CD14-positive monocyte (primary cell): ENCODE measurements at regions of chr2 and their contacts with region 1.

Region 1: GRCh38 chr2:135741395-135742324 is at the start of gene UBXN4:
- DNase-seq: peak; percentile 98 to 99 (median 98)
- H3K4me3 ChIP-seq: peak within 1 kb of the TSS; percentile 88 to 99 (median 90)
- H3K4me3 Mint-ChIP-seq: peak within 1 kb of the TSS; percentile 94 to 96
- H3K27ac ChIP-seq: peak within 1 kb of the TSS; percentile 98 to 100
- H3K27ac Mint-ChIP-seq: peak within 1 kb of the TSS; percentile 96 to 99 (median 99)
- H3K4me1 ChIP-seq: peaks cover 10 to 18% of the 10 kb centered on the region in 2 donors
- H3K4me1 Mint-ChIP-seq: peaks cover 23% of the 10 kb centered on the region
- H3K27me3 ChIP-seq: no peaks in the 10 kb centered on the region
- H3K27me3 Mint-ChIP-seq: peaks cover 0 to 1% (median 0%) of the 10 kb centered on the region in 3 donors
- CTCF ChIP-seq: peak; percentile 32
- polyA plus RNA-seq, gene UBXN4: 53.8 to 107 (median 74.2) TPM

Region 2: DNA sequence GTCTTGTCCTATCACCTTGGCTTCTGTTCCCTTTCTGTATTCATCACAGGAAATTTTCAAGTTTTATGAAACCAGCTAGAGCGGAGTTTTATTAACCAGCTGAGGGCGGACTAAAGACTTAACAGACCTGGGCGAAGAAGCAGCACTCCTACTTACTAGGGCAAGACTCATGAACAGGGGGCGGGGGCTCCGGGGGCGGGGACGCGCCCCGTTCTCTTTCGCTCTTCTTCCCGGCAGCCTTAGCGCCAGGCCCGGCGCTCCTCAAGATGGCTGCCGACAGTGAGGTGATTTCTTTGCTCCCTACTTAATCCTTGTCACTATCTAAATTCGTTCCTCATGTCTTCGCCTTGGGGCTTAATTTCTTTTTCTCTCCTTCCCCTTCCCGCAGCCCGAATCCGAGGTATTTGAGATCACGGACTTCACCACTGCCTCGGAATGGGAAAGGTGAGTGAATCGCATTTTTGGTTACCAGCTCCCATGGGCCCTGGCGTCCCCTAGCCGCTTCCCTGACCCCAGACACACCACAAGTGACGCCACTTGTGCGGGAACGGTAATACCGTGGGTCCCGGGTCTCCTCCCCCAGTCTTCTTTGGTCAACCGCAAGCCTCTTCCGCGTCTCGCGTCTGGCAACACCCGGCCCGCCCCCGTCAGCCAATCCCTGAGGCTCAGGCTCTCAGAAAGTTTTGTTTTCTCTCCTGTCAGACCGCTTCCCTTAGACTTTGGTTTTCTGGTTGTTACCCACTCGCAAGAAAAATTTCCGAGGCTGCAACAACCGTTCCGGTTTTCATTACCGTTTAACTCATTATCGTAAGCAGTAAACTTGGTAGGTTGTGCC is 689.4 kb before region 1 on chr2 and contains the start of gene RAB3GAP1:
- intact Hi-C with region 1: loop called in 1 of 2 experiments (anchors 10 kb)
- DNase-seq: peak; percentile 76 to 81 (median 77)
- H3K4me3 ChIP-seq: peak within 1 kb of the TSS; percentile 89 to 97 (median 94)
- H3K4me3 Mint-ChIP-seq: peak within 1 kb of the TSS; percentile 99
- H3K27ac ChIP-seq: peak within 1 kb of the TSS; percentile 99 to 100
- H3K27ac Mint-ChIP-seq: peak within 1 kb of the TSS; percentile 100
- H3K4me1 ChIP-seq: peaks cover 17 to 23% of the 10 kb centered on the region in 2 donors
- H3K4me1 Mint-ChIP-seq: peaks cover 27% of the 10 kb centered on the region
- H3K27me3 ChIP-seq: no peaks in the 10 kb centered on the region
- H3K27me3 Mint-ChIP-seq: peaks cover 0 to 1% (median 0%) of the 10 kb centered on the region in 3 donors
- CTCF ChIP-seq: no peak
- polyA plus RNA-seq, gene RAB3GAP1: 8.0 to 17.4 (median 11.3) TPM

Region 3: DNA sequence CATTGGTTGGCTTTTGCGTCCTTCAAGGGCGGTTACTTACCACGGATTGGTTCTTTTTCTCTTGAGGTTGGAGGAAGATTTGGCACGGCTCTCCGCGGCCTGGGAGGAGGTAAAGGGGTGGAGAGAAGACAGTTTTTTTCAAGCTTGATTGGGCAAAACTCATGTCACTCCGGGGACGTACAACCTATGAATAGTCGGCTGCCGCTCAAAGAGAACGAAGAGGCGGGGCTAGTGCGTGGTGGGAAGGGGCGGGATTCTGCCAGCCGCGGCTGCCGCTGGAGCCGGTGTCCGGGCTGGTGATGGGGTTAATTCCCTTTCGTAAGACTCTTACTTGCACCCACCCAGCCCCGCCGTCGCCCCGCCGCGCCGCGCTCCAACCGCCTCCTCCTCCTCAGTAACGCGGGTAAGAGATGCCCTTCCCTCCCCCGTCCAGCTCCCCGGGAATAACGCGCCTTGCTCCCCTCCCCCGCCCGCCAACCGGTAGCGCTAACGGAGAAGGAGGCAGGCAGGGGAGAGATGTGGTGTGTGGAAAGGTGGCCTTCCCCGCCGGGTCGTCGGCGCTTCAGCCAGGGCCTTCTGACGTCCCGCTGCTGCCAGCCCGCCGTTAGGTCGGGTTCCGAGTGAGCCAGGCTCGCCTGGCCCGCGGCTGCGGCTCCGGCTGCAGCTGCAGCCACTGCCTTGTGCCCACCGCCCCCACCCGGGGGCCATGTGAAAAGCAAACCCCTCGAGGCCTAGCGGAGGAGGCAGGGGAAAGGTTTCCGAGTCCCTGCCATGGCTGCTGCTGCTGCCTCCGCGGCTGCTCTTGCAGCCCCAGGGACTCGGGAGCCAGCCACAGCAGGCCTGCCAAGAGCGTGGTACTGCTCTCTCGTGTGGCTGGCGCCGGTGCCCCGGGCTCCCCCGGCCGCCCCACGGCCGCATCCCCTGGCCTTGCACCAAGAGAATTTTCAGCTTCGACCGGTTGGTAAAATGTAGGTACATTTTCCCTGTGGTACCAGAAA is 210.1 kb before region 1 on chr2 and contains the start of gene R3HDM1:
- intact Hi-C with region 1: loop called (anchors 5 to 10 kb)
- DNase-seq: peak; percentile 99
- H3K4me3 ChIP-seq: peak within 1 kb of the TSS; percentile 92 to 98 (median 98)
- H3K4me3 Mint-ChIP-seq: no peak within 1 kb of the TSS
- H3K27ac ChIP-seq: peak within 1 kb of the TSS; percentile 90 to 96
- H3K27ac Mint-ChIP-seq: peak within 1 kb of the TSS in 4 of 7 donors; percentile 31 to 73 (median 58)
- H3K4me1 ChIP-seq: peaks cover 14 to 26% of the 10 kb centered on the region in 2 donors
- H3K4me1 Mint-ChIP-seq: peaks cover 18% of the 10 kb centered on the region
- H3K27me3 ChIP-seq: no peaks in the 10 kb centered on the region
- H3K27me3 Mint-ChIP-seq: peaks cover 0 to 1% (median 0%) of the 10 kb centered on the region in 3 donors
- CTCF ChIP-seq: no peak
- polyA plus RNA-seq, gene R3HDM1: 5.4 to 24.5 (median 13.1) TPM

Region 4: GRCh38 chr2:135797497-135798274 is 56.0 kb after region 1 on chr2:
- intact Hi-C with region 1: no loop called
- DNase-seq: peak; percentile 70 to 78 (median 77)
- H3K4me3 ChIP-seq: no peak overlapping the region
- H3K4me3 Mint-ChIP-seq: no peak overlapping the region
- H3K27ac ChIP-seq: no peak overlapping the region
- H3K27ac Mint-ChIP-seq: peak overlapping the region in 1 of 7 donors; percentile 59
- H3K4me1 ChIP-seq: peaks cover 11 to 15% of the 10 kb centered on the region in 2 donors
- H3K4me1 Mint-ChIP-seq: peaks cover 31% of the 10 kb centered on the region
- H3K27me3 ChIP-seq: no peaks in the 10 kb centered on the region
- H3K27me3 Mint-ChIP-seq: peaks cover 6 to 9% (median 8%) of the 10 kb centered on the region in 3 donors
- CTCF ChIP-seq: peak; percentile 91

Region 5: GRCh38 chr2:135882415-135882814 is 140.8 kb after region 1 on chr2:
- intact Hi-C with region 1: loop called in 1 of 2 experiments (anchors 10 kb)
- DNase-seq: no peak
- H3K4me3 ChIP-seq: no peak overlapping the region
- H3K4me3 Mint-ChIP-seq: no peak overlapping the region
- H3K27ac ChIP-seq: no peak overlapping the region
- H3K27ac Mint-ChIP-seq: no peak overlapping the region
- H3K4me1 ChIP-seq: no peaks in the 10 kb centered on the region
- H3K4me1 Mint-ChIP-seq: no peaks in the 10 kb centered on the region
- H3K27me3 ChIP-seq: no peaks in the 10 kb centered on the region
- H3K27me3 Mint-ChIP-seq: peaks cover under 1 to 2% (median 1%) of the 10 kb centered on the region in 3 donors
- CTCF ChIP-seq: no peak

Region 6: GRCh38 chr2:135931776-135932443 is 190.2 kb after region 1 on chr2:
- intact Hi-C with region 1: no loop called
- DNase-seq: peak; percentile 30 to 58 (median 39)
- H3K4me3 ChIP-seq: no peak overlapping the region
- H3K4me3 Mint-ChIP-seq: no peak overlapping the region
- H3K27ac ChIP-seq: peak overlapping the region in 1 of 2 donors; percentile 54
- H3K27ac Mint-ChIP-seq: peak overlapping the region; percentile 37 to 82 (median 69)
- H3K4me1 ChIP-seq: peaks cover 18 to 24% of the 10 kb centered on the region in 2 donors
- H3K4me1 Mint-ChIP-seq: peaks cover 30% of the 10 kb centered on the region
- H3K27me3 ChIP-seq: no peaks in the 10 kb centered on the region
- H3K27me3 Mint-ChIP-seq: peaks cover 0 to 1% (median 0%) of the 10 kb centered on the region in 3 donors
- CTCF ChIP-seq: no peak

Region 7: DNA sequence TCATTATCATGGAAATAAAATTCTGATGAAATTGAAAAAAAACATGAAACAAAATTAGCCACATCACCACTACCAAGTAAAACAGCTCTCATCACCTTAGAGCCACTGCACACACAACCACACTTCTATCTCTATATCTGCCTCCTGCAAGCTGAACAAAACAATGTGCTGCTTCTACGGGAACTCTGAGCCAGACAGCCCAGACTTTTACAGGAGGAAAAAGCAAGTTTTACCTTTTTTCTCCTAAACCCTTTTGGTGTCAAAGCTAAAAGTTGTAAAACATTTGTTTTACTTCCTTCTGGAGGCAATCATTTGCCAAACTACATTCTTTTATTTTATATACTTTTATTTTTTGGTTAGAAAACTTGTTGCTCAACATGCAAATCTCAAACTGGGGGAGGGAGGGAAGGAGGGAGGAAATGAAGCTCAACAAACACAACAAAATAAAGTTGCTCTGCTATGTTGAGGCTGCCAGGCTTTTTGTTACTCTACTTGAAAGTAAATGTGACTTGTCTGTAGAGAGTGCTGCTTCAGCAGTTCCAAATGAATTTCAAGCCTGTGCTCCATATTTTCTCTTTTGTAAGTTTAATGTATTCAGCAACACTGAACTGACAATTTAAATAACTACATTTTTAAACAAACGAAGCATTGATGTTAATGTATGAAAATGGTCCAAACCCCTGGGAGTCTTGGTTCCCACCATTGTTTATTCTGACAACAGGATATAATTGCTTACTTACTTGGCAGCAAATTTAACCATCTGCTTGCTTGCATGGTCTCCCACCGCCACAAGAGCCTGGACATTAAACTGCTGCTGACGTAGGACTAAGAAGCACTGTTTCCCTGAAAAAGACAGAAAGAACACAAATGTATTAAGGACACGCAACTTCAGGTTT is 219.2 kb after region 1 on chr2:
- intact Hi-C with region 1: no loop called
- DNase-seq: no peak
- H3K4me3 ChIP-seq: no peak overlapping the region
- H3K4me3 Mint-ChIP-seq: no peak overlapping the region
- H3K27ac ChIP-seq: peak overlapping the region in 1 of 2 donors; percentile 60
- H3K27ac Mint-ChIP-seq: peak overlapping the region in 5 of 7 donors; percentile 41 to 91 (median 64)
- H3K4me1 ChIP-seq: peaks cover 8 to 23% of the 10 kb centered on the region in 2 donors
- H3K4me1 Mint-ChIP-seq: peaks cover 37% of the 10 kb centered on the region
- H3K27me3 ChIP-seq: no peaks in the 10 kb centered on the region
- H3K27me3 Mint-ChIP-seq: no peaks in the 10 kb centered on the region
- CTCF ChIP-seq: no peak